ENCODE measurements at regions of chr2 and their contacts with region 1.

Region 1: GRCh38 chr2:32946314-32947075 is at the start of gene LTBP1:
- DNase-seq: peak; percentile 69
- ATAC-seq: peak; percentile 79
- H3K4me3 Mint-ChIP-seq: peak within 1 kb of the TSS; percentile 68
- H3K27ac Mint-ChIP-seq: no peak within 1 kb of the TSS
- H3K4me1 Mint-ChIP-seq: peaks cover 3% of the 10 kb centered on the region
- H3K27me3 Mint-ChIP-seq: peaks cover 42% of the 10 kb centered on the region
- CTCF ChIP-seq: peak; percentile 64
- total RNA-seq, gene LTBP1: 0.18 TPM in 1 of 2 experiments, not detected in the other

Region 2: DNA sequence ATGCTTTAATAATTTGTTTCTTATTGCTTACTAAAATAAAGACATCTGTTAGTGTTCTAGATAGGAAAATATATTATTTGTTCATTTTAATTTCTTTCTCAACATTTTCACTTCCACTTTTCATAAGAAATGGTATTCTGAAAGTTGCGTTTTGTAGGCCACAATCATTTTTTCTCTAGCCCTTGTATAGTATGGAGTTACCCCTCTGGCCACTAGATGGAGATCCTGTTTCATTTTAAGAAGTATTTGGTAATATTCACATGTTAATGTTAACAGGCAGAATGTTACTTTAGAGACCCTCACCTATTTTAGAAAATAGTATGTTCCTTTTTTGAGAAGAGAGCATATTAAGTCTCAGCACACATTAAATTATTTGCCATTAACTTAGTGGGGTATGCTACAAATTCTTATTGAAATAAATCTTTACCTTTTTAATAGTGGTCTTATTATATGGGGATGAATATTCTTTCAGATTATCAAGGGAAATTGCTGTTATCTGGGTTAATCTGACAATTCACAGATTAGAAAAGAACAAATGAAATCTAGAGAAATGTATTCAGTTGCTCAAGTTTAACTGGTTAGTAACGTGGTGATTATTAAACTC is 392.6 kb before region 1 on chr2:
- CTCF ChIA-PET with region 1: no interaction called
- POLR2A ChIA-PET with region 1: no interaction called
- intact Hi-C with region 1: loop called (anchors 5 kb)
- DNase-seq: no peak
- ATAC-seq: peak; percentile 71
- H3K4me3 Mint-ChIP-seq: no peak overlapping the region
- H3K27ac Mint-ChIP-seq: no peak overlapping the region
- H3K4me1 Mint-ChIP-seq: peaks cover 2% of the 10 kb centered on the region
- H3K27me3 Mint-ChIP-seq: no peaks in the 10 kb centered on the region
- CTCF ChIP-seq: peak; percentile 86

Region 3: DNA sequence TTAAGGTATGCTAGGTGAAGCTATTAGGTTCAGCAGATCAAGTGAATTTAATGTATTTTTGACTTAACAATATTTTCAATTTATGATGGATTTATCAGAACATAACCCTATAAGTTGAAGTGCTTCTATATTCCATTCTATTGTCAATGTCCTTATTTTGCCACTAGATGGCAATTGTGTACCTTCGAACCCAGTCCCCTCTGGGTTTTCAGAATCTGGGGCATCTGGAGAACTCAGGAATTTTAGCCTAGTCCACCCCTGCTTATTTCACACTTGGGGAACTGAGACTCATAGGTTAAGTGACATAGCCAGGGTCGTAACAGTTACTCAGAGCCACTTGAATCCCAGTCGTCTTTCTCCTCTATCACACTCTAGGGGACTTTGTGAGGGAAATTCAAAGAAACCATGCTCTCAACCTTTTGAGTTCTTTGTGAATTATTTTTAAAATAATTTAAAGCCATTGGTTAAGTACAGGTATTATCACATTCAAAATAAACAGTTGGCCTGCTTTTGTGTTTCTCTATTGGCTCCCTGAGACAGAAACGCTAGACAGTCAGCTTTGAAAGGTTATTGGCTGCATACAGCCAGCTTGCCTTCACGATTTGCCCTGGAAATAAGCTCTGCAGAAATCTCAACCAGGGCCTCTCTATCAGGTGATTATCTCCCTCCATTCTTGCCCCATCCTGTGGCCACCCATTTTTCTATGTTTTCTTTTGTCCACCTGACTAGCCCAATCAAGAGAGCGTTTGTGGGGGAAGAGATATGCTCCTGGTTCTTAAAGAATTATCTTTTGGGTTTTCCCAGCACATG is 173.7 kb before region 1 on chr2:
- CTCF ChIA-PET with region 1: interaction called, 3 read pairs
- POLR2A ChIA-PET with region 1: no interaction called
- intact Hi-C with region 1: loop called (anchors 10 kb)
- DNase-seq: no peak
- ATAC-seq: no peak
- H3K4me3 Mint-ChIP-seq: no peak overlapping the region
- H3K27ac Mint-ChIP-seq: no peak overlapping the region
- H3K4me1 Mint-ChIP-seq: peaks cover 4% of the 10 kb centered on the region
- H3K27me3 Mint-ChIP-seq: no peaks in the 10 kb centered on the region
- CTCF ChIP-seq: peak; percentile 58